Transverse colon (tissue), 4 donors: ENCODE measurements at regions of chr6 and their contacts with region 1.

Region 1: GRCh38 chr6:165876588-165876987 is 213.5 kb upstream of the PDE10A start:
- DNase-seq: peak; percentile 50
- H3K4me3 ChIP-seq: no peak overlapping the region
- H3K27ac ChIP-seq: peak overlapping the region; percentile 58 to 84 (median 80)
- H3K4me1 ChIP-seq: peaks cover 0 to 21% (median 3%) of the 10 kb centered on the region in 4 donors
- H3K27me3 ChIP-seq: no peaks in the 10 kb centered on the region
- CTCF ChIP-seq: no peak
- EP300 ChIP-seq: peak; percentile 61
- POLR2A ChIP-seq: no peak

Region 2: GRCh38 chr6:165556116-165556843 is 320.3 kb before region 1 on chr6:
- in situ Hi-C with region 1: no loop called
- intact Hi-C with region 1: no loop called
- DNase-seq: no peak
- H3K4me3 ChIP-seq: no peak overlapping the region
- H3K27ac ChIP-seq: no peak overlapping the region
- H3K4me1 ChIP-seq: peaks cover 0 to 5% (median 0%) of the 10 kb centered on the region in 4 donors
- H3K27me3 ChIP-seq: no peaks in the 10 kb centered on the region
- CTCF ChIP-seq: no peak
- EP300 ChIP-seq: no peak
- POLR2A ChIP-seq: no peak

Region 3: DNA sequence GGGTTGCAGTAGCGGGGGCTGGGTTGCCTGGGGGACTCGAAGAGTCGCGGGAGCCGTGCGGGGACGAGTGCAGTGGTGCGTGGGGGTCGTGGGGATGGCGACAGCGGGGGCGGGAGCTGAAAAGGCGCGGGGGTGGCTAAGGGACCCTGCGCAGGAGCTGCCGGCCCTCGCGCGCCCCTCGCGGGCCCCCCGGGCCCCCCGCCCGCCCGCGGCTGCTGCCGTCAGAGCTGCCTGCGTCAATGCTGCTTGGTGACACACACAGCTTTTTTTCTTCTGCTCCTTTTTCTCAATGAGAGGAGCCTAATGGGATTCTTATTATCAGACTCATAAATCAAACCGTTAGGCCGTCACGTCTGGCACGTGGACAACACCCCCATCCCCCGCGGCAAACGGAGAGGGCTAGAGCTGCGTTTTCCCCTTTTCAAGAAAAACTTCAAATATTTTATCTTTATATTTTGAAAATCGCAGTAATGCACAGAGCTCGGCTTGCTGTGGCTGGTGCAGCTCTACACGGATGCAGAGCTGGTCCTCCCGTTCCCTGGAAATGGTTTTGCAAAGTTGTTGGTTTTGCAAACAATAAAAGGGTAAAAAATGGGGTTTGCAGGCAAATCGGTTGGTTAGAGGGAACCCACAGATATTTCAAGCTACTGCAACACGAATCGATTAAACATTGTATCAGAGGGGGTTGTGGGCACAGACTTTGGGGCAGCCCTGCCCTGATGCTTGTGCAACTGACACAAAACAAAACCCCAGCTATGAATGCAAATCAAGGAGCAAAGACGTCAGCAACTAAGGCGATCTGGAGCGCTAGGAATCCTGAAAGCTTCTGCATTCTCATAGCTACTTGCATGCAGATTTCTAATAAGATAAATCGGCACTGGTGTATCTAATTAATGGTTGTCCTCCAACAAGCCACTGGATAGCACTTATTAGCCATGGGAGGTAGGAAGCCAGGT is 129.6 kb after region 1 on chr6:
- in situ Hi-C with region 1: no loop called
- intact Hi-C with region 1: loop called (anchors 2 kb)
- DNase-seq: peak; percentile 46
- H3K4me3 ChIP-seq: peak overlapping the region; percentile 11 to 34 (median 20)
- H3K27ac ChIP-seq: peak overlapping the region; percentile 72 to 89 (median 77)
- H3K4me1 ChIP-seq: peaks cover 10 to 24% (median 18%) of the 10 kb centered on the region in 4 donors
- H3K27me3 ChIP-seq: peaks cover 52% of the 10 kb centered on the region
- CTCF ChIP-seq: no peak
- EP300 ChIP-seq: peak; percentile 89
- POLR2A ChIP-seq: no peak